ENCODE measurements at regions of chrX and their contacts with region 1.

Region 1: GRCh38 chrX:138408101-138408500 is 303.4 kb downstream of the FGF13 start:
- DNase-seq: no peak
- ATAC-seq: no peak

Region 2: DNA sequence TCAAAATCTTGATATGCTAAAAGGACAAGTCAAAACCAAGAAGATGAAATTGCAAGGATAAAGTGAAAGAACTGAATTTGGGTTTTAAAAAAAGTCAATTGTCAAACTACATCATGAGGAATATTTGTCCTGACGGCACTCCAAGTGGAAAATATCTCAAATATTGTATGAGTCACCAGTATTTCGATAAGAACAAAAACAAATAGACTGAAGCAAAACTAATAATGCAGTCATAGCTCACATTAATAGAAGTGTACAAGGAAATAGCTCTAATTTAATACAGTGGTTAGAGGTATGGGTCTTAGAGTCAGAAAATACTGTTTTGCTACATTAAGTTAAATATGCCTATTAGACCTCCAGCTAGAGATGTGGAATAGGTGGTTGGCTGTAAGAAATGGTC is 1037.4 kb before region 1 on chrX:
- intact Hi-C with region 1: no loop called
- DNase-seq: no peak
- ATAC-seq: no peak

Region 3: DNA sequence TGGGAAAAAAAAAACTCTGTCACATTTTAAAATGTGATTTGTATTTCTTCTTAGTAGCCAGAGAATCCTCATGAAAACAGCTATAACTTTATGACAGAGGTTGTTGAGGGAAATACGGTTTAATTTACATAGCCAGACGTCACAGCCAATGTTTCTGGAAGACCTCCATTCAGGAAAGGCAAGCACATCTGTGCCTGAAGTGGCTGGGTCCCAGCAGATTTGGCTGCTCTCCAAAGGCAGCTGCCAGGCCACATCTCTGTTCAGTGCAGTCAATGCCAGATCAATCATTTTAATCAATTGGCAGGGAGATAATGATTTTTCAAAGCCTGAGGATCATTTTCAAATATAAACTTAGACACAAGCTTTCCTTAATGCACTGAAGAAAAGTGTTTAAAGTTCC is 928.7 kb before region 1 on chrX:
- intact Hi-C with region 1: loop called (anchors 5 kb)
- DNase-seq: no peak
- ATAC-seq: no peak

Region 4: DNA sequence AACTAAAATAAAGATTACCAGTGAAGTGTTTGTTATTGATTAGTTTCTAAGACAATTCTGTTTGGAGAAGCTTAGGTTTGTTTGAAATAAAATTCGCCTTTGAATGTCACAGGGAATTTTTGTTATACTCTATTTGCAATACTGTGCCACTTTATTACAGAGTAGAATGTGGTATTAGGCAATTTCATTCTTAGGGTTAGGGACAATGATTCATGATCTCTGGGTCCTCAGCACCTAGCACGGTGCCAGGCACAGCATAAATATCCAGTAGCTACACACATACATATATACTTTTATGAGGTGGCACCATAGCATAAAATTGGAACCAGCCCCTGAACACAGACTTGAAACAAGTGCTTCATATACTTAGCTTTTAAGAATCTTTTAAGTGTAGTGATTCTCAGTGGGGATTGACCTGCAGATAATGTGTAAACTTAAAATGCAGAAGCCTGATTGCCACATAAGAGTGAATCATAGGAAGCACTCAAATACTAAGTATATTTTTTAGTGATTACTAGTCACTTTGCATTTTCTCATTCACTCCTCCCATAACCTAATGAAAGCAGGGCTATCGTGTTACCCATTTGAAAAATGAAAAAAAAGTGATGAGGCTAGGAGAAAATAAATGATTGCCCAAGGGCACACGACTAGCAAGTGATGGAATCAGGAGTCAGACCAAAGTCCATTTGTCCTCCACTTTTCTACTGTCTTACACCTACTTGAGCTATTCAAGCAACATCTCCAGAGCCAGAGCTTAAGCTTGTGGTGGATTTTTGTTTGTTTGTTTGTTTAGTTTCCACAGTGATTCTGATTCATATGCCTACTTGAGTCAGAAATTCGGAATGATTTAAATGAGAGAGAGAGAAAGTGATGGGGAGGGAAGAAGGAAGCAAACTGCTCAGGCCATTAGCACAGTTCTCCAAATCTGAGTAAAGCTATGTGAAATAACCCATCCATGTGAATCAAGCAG is 669.5 kb after region 1 on chrX:
- intact Hi-C with region 1: no loop called
- DNase-seq: no peak
- ATAC-seq: no peak

Measured in sciatic nerve (tissue), 2 donors.